PC-9 (cell line): ENCODE measurements at regions of chr11 and their contacts with region 1.

Region 1: GRCh38 chr11:57335343-57336110 is at the start of gene SSRP1:
- DNase-seq: peak; percentile 82 to 85
- H3K4me3 ChIP-seq: peak within 1 kb of the TSS; percentile 70
- H3K27ac ChIP-seq: peak within 1 kb of the TSS; percentile 28; the same call in 1 of the 2 replicates
- H3K4me1 ChIP-seq: peaks cover 31% of the 10 kb centered on the region
- H3K27me3 ChIP-seq: no peaks in the 10 kb centered on the region
- CTCF ChIP-seq: no peak
- total RNA-seq, gene SSRP1: 286 and 290 TPM in 2 replicates

Region 2: DNA sequence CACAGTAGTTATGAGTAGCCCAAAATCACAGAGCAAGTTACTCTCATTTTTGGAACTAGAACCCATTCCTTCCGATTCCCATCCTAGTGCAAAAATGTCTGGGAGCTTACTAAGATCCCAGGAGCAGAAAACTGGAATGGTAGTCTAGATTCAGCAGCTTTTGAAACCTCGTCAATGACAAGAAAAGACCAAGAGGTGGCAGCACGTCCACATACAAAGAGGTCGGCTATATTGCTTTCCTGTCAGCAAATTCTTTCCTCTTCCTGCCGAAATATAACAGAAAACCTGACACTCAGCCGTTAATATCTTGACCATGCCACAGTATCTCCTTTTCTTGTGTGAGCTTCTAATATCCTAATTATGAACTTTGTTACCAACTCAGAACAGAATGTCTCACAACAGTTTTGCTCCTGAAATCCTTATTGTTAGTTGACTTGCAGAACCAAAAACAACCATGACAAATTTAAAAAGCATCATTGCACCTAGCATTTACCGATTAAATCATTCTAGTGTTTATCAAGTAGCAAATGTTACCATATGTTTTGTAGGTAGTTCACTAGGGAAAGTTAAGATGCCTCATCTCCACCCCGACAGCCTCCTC is 494.2 kb before region 1 on chr11:
- CTCF ChIA-PET with region 1: no interaction called
- POLR2A ChIA-PET with region 1: no interaction called
- intact Hi-C with region 1: loop called (anchors 5 kb)
- DNase-seq: peak; percentile 52
- H3K4me3 ChIP-seq: no peak overlapping the region
- H3K27ac ChIP-seq: no peak overlapping the region
- H3K4me1 ChIP-seq: peaks cover 8% of the 10 kb centered on the region; the same call in 1 of the 2 replicates
- H3K27me3 ChIP-seq: no peaks in the 10 kb centered on the region
- CTCF ChIP-seq: peak; percentile 93

Region 3: GRCh38 chr11:57751676-57752253 is 416.2 kb after region 1 on chr11 and contains the start of gene BTBD18:
- CTCF ChIA-PET with region 1: no interaction called
- POLR2A ChIA-PET with region 1: interaction called, 10 read pairs
- intact Hi-C with region 1: no loop called
- DNase-seq: peak; percentile 18 to 50
- H3K4me3 ChIP-seq: no peak within 1 kb of the TSS
- H3K27ac ChIP-seq: no peak within 1 kb of the TSS
- H3K4me1 ChIP-seq: no peaks in the 10 kb centered on the region; the same call in 1 of the 2 replicates
- H3K27me3 ChIP-seq: no peaks in the 10 kb centered on the region
- CTCF ChIP-seq: peak; percentile 63
- total RNA-seq, gene BTBD18: not detected in 2 replicates